PC-3 (cell line): ENCODE measurements at regions of chr4 and their contacts with region 1.

Region 1: GRCh38 chr4:126223784-126224407 is 909.1 kb downstream of the FAT4 start:
- DNase-seq: peak; percentile 27
- ATAC-seq: no peak
- H3K4me3 ChIP-seq: no peak overlapping the region
- H3K27ac ChIP-seq: no peak overlapping the region
- H3K4me1 ChIP-seq: no peaks in the 10 kb centered on the region
- H3K27me3 ChIP-seq: no peaks in the 10 kb centered on the region
- CTCF ChIP-seq: peak; percentile 57

Region 2: DNA sequence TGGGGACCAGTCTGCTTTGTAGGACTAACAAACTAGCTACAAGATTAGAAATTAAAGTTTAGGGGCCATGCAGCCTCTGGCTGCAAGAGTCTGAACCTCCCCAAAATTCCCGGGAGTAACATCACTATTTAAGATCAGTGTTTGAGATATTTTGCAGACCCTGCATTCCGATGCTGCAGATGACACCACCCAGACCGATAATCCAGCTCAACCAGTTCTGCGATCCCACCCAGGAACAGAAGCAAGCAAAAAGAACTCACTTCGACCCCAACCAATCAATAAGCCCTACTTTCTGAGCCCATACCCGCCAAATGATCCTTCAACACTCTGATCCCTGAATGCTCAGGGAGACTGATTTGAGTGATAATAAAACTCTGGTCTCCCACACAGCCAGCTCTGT is 31.4 kb before region 1 on chr4:
- CTCF ChIA-PET with region 1: no interaction called
- POLR2A ChIA-PET with region 1: no interaction called
- intact Hi-C with region 1: no loop called
- DNase-seq: no peak
- ATAC-seq: no peak
- H3K4me3 ChIP-seq: no peak overlapping the region
- H3K27ac ChIP-seq: no peak overlapping the region
- H3K4me1 ChIP-seq: no peaks in the 10 kb centered on the region
- H3K27me3 ChIP-seq: no peaks in the 10 kb centered on the region
- CTCF ChIP-seq: no peak

Region 3: DNA sequence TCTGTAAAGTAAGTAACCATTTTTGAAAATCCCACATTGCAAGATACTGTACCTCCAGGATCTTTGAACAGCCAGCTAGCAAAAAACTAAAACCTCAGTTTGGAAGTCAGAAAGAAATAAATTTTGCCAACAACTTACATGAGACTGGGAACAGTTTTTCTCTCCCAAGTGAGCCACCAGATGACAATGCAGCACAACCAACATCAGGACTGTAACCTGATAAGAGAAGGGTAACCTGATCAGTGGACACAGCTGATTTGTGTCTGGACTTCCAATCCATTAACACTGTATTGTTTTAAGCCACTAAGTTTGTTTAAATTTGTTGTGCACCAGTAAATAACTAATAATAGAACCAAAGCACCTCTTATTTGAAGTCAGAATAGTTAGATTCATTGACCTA is 14.1 kb after region 1 on chr4:
- CTCF ChIA-PET with region 1: no interaction called
- POLR2A ChIA-PET with region 1: no interaction called
- intact Hi-C with region 1: no loop called
- DNase-seq: no peak
- ATAC-seq: no peak
- H3K4me3 ChIP-seq: no peak overlapping the region
- H3K27ac ChIP-seq: no peak overlapping the region
- H3K4me1 ChIP-seq: no peaks in the 10 kb centered on the region
- H3K27me3 ChIP-seq: no peaks in the 10 kb centered on the region
- CTCF ChIP-seq: no peak

Region 4: GRCh38 chr4:126405369-126405982 is 181.6 kb after region 1 on chr4:
- CTCF ChIA-PET with region 1: no interaction called
- POLR2A ChIA-PET with region 1: no interaction called
- intact Hi-C with region 1: loop called (anchors 5 kb)
- DNase-seq: no peak
- ATAC-seq: 0 out of 2 replicates have a peak, but pooled peaks have one; percentile 42
- H3K4me3 ChIP-seq: no peak overlapping the region
- H3K27ac ChIP-seq: no peak overlapping the region
- H3K4me1 ChIP-seq: no peaks in the 10 kb centered on the region
- H3K27me3 ChIP-seq: no peaks in the 10 kb centered on the region
- CTCF ChIP-seq: peak; percentile 49

Region 5: GRCh38 chr4:126583509-126583908 is 359.6 kb after region 1 on chr4:
- CTCF ChIA-PET with region 1: interaction called, 5 read pairs
- POLR2A ChIA-PET with region 1: no interaction called
- intact Hi-C with region 1: loop called (anchors 5 kb)
- DNase-seq: peak; percentile 20
- ATAC-seq: peak; percentile 81
- H3K4me3 ChIP-seq: no peak overlapping the region
- H3K27ac ChIP-seq: no peak overlapping the region
- H3K4me1 ChIP-seq: no peaks in the 10 kb centered on the region
- H3K27me3 ChIP-seq: no peaks in the 10 kb centered on the region
- CTCF ChIP-seq: 0 out of 2 replicates have a peak, but pooled peaks have one; percentile 32

Region 6: DNA sequence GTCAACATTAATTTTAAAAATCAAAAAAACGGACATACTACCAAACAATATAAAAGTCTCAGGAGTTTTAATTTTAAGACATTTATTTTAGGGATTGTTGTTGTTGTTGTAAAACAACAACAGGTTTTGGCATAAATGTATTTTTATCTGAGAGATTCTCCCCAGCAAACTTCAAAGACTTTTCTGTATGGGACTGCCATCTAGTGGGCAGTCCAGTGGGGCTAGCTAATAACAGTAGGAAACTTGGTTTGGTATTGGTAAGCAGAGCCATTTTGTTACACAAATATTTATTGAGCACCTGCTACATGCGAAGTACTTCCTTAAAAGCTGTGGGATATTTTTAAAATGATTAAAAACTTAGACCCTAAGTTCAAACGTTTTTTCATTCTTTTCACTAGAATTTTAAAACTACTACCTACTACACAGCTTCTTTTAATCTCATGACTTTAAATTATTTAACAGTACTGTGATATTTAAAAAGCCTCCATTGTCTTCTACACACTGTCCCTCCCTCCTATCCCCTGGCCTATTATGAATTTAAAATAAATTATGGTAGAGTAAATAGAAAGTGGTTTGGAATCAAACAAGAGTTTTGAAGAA is 380.5 kb after region 1 on chr4:
- CTCF ChIA-PET with region 1: interaction called, 5 read pairs
- POLR2A ChIA-PET with region 1: no interaction called
- intact Hi-C with region 1: loop called (anchors 5 kb)
- DNase-seq: peak; percentile 38
- ATAC-seq: 0 out of 2 replicates have a peak, but pooled peaks have one; percentile 33
- H3K4me3 ChIP-seq: no peak overlapping the region
- H3K27ac ChIP-seq: no peak overlapping the region
- H3K4me1 ChIP-seq: no peaks in the 10 kb centered on the region
- H3K27me3 ChIP-seq: no peaks in the 10 kb centered on the region
- CTCF ChIP-seq: peak; percentile 70